CD4-positive, alpha-beta T cell (primary cell): ENCODE measurements at regions of chr14 and their contacts with region 1.

Region 1: DNA sequence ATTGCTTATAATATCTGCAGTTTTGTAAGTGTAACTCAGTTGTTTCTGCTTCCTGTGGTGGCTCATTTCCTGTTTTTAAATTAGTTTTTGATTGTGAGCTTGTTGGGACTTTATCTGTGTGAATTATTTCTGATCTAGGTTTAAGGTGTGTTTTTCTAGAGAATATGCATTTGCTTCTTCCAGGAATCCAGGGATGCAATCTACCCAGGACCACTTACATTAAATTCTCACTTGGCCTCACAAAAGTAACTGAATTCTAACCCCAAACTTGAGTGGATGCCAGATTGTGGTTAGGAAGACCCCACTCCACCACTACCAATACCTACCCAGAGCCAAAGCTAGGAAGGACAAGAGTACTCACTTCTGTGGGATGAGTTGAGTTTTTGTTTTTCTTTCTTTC is 11.9 kb downstream of the STYX start:
- DNase-seq: peak in 4 of 14 experiments; percentile 21 to 65 (median 46)
- ATAC-seq: peak; percentile 63
- H3K4me3 ChIP-seq: peak overlapping the region; percentile 41
- H3K4me3 Mint-ChIP-seq: peak overlapping the region; percentile 76
- H3K27ac ChIP-seq: peak overlapping the region; percentile 77 to 81
- H3K27ac Mint-ChIP-seq: peak overlapping the region; percentile 98
- H3K4me1 ChIP-seq: peaks cover 39% of the 10 kb centered on the region
- H3K4me1 Mint-ChIP-seq: peaks cover 83% of the 10 kb centered on the region
- H3K27me3 ChIP-seq: no peaks in the 10 kb centered on the region
- H3K27me3 Mint-ChIP-seq: no peaks in the 10 kb centered on the region
- CTCF ChIP-seq: no peak

Region 2: DNA sequence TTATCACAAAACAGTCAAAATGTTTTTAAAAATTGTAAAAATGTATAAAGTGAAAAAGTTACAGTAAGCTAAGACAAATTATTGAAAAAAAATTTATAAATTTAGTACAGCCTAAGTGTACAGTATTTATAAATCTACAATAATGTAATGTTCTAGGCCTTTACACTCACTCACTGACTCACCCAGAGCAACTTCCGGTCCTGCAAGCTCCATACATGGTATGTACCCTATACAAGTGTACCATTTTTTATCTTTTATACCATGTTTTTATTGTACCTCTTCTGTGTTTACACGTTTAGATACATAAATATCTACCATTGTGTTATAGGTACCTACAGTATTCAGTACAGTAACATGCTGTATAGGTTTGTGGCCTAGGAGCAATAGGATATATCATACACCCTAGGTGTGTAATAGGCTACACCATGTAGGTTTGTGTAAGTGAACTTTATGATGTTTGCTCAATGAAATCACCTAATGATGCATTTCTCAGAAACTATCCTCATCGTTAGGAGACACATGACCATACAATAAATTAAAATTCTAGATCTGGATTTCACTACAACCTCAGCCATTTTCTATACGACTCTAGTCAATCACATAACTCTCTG is 256.4 kb before region 1 on chr14:
- CTCF ChIA-PET with region 1: no interaction called
- POLR2A ChIA-PET with region 1: no interaction called
- intact Hi-C with region 1: no loop called
- DNase-seq: no peak
- ATAC-seq: no peak
- H3K4me3 ChIP-seq: no peak overlapping the region
- H3K4me3 Mint-ChIP-seq: no peak overlapping the region
- H3K27ac ChIP-seq: no peak overlapping the region
- H3K27ac Mint-ChIP-seq: no peak overlapping the region
- H3K4me1 ChIP-seq: no peaks in the 10 kb centered on the region
- H3K4me1 Mint-ChIP-seq: no peaks in the 10 kb centered on the region
- H3K27me3 ChIP-seq: no peaks in the 10 kb centered on the region
- H3K27me3 Mint-ChIP-seq: no peaks in the 10 kb centered on the region
- CTCF ChIP-seq: no peak

Region 3: DNA sequence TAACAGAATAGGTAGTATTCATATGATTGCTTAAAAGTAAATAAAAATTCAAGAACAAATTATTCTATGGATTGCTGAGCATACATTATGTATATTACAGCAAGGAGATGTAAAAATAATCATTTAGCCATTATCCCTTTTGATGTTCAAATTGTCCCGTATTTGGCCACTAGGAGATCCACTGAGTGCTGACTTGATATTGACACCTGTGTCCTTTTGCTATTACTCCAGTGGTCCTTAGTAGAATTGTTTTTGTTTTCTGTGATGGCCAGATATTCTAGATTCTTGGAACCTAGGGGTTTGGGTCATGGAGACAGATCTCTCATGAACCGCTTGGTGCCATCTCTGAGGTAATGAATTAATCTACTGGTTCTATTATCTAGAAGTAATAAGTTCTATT is 63.3 kb before region 1 on chr14:
- CTCF ChIA-PET with region 1: no interaction called
- POLR2A ChIA-PET with region 1: interaction called, 4 read pairs
- intact Hi-C with region 1: loop called in 1 of 2 experiments (anchors 1 kb)
- DNase-seq: peak in 3 of 14 experiments; percentile 34 to 57 (median 50)
- ATAC-seq: peak; percentile 63
- H3K4me3 ChIP-seq: no peak overlapping the region
- H3K4me3 Mint-ChIP-seq: no peak overlapping the region
- H3K27ac ChIP-seq: no peak overlapping the region
- H3K27ac Mint-ChIP-seq: no peak overlapping the region
- H3K4me1 ChIP-seq: peaks cover 2% of the 10 kb centered on the region
- H3K4me1 Mint-ChIP-seq: peaks cover 10% of the 10 kb centered on the region
- H3K27me3 ChIP-seq: no peaks in the 10 kb centered on the region
- H3K27me3 Mint-ChIP-seq: no peaks in the 10 kb centered on the region
- CTCF ChIP-seq: peak; percentile 51

Region 4: GRCh38 chr14:52706724-52707706 is 34.9 kb before region 1 on chr14 and contains the start of gene PSMC6:
- CTCF ChIA-PET with region 1: no interaction called
- POLR2A ChIA-PET with region 1: interaction called, 12 read pairs
- intact Hi-C with region 1: loop called in 1 of 2 experiments (anchors 5 kb)
- DNase-seq: peak; percentile 90 to 97 (median 95)
- ATAC-seq: peak; percentile 98
- H3K4me3 ChIP-seq: peak within 1 kb of the TSS; percentile 72
- H3K4me3 Mint-ChIP-seq: peak within 1 kb of the TSS; percentile 96
- H3K27ac ChIP-seq: peak within 1 kb of the TSS; percentile 71 to 88
- H3K27ac Mint-ChIP-seq: peak within 1 kb of the TSS; percentile 94
- H3K4me1 ChIP-seq: peaks cover 13% of the 10 kb centered on the region
- H3K4me1 Mint-ChIP-seq: peaks cover 48% of the 10 kb centered on the region
- H3K27me3 ChIP-seq: no peaks in the 10 kb centered on the region
- H3K27me3 Mint-ChIP-seq: no peaks in the 10 kb centered on the region
- CTCF ChIP-seq: no peak
- total RNA-seq, gene PSMC6: 110 to 111 TPM

Region 5: DNA sequence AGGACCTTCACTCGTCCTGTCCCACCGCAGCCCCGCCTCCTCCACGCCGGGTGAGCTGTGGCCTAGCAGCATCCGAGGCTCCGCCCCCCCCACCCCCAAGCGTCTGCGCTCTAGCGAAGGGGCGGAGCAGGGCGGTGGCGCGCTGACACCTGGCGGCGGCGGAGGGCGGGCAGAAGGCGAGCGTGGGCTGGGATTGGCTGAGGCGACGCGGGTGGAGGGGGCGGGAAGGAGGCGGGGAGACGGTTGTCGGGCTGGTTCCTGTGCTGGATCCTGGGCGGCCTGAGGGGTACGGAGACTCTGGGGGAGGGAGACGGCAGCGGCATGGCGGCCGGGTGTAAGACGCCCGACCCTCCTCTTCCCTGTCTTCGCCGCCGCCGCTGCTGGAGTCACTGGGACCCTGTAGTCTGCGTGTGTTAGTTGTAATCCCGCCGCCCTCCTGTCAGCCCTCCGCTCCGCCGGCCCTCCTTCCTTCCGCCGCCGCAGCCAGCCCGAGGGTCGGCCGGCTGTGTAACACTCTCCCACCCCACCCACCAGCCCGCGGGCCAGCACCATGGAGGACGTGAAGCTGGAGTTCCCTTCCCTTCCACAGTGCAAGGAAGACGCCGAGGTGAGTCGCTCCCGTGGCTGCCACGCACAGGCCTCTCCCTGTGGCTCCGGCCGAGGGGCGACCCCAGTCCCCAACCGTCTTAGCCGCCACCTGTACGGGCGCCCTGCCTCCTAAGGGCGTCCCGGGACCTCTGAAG is 11.8 kb before region 1 on chr14 and contains the start of gene STYX:
- CTCF ChIA-PET with region 1: interaction called, 6 read pairs
- POLR2A ChIA-PET with region 1: interaction called, 113 read pairs
- intact Hi-C with region 1: loop called in 1 of 2 experiments (anchors 2 kb)
- DNase-seq: peak; percentile 94 to 100 (median 98)
- ATAC-seq: peak; percentile 95
- H3K4me3 ChIP-seq: peak within 1 kb of the TSS; percentile 100
- H3K4me3 Mint-ChIP-seq: peak within 1 kb of the TSS; percentile 93
- H3K27ac ChIP-seq: peak within 1 kb of the TSS; percentile 84 to 89
- H3K27ac Mint-ChIP-seq: peak within 1 kb of the TSS; percentile 94
- H3K4me1 ChIP-seq: peaks cover 36% of the 10 kb centered on the region
- H3K4me1 Mint-ChIP-seq: peaks cover 36% of the 10 kb centered on the region
- H3K27me3 ChIP-seq: no peaks in the 10 kb centered on the region
- H3K27me3 Mint-ChIP-seq: no peaks in the 10 kb centered on the region
- CTCF ChIP-seq: no peak
- total RNA-seq, gene STYX: 15.3 to 16.2 TPM

Region 6: DNA sequence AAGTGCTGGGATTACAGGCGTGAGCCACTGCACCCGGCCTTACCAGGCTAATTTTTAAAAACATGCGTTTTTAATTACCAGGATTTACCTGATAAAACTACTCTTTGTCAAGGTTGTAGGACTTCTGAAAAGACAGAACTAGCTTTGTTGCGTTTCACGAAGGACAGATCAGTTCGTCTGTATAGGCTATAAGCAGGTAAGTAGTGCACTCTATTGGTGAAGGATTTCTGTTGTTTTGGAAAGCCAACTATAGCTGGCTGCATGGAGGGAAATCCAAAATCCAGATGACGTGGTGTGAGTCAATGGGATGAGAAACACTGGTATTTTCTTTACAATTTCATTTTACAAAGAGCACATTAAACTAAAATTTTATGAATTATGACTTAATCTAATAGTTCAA is 35.0 kb after region 1 on chr14:
- CTCF ChIA-PET with region 1: interaction called, 3 read pairs
- POLR2A ChIA-PET with region 1: interaction called, 9 read pairs
- intact Hi-C with region 1: loop called in 1 of 2 experiments (anchors 5 kb)
- DNase-seq: peak in 3 of 14 experiments; percentile 19 to 34 (median 32)
- ATAC-seq: peak; percentile 56
- H3K4me3 ChIP-seq: no peak overlapping the region
- H3K4me3 Mint-ChIP-seq: no peak overlapping the region
- H3K27ac ChIP-seq: no peak overlapping the region
- H3K27ac Mint-ChIP-seq: peak overlapping the region; percentile 37
- H3K4me1 ChIP-seq: no peaks in the 10 kb centered on the region
- H3K4me1 Mint-ChIP-seq: no peaks in the 10 kb centered on the region
- H3K27me3 ChIP-seq: no peaks in the 10 kb centered on the region
- H3K27me3 Mint-ChIP-seq: no peaks in the 10 kb centered on the region
- CTCF ChIP-seq: peak; percentile 44